ENCODE measurements at regions of chr16 and their contacts with region 1.

Region 1: GRCh38 chr16:72858665-72859493 is 189.0 kb downstream of the ZFHX3 start:
- DNase-seq: peak; percentile 67

Region 2: DNA sequence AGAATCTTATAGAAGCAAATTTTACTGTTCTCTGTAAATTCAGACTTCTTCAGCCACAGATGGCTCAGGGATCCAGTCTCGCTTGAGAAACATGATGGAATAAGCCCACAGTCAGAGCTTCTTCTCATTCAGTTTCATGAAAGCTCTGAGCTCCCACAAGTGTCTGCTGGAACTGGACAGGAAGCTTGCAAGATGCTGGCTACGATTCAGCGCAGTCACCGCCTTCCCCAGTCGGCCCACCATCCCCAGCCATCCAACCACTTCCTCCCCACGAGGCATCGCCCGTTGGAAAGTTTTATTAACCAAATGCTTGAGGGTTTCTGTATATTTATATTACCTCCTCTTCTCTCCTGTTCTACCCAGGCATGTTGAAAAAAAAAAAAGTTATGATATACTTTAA is 17.3 kb after region 1 on chr16:
- intact Hi-C with region 1: loop called (anchors 2 kb)
- DNase-seq: peak; percentile 88

Region 3: GRCh38 chr16:72886346-72886974 is 27.6 kb after region 1 on chr16:
- intact Hi-C with region 1: no loop called
- DNase-seq: no peak

Region 4: GRCh38 chr16:72978212-72978611 is 119.3 kb after region 1 on chr16:
- intact Hi-C with region 1: no loop called
- DNase-seq: no peak